ENCODE measurements at regions of chr11 and their contacts with region 1.

Region 1: DNA sequence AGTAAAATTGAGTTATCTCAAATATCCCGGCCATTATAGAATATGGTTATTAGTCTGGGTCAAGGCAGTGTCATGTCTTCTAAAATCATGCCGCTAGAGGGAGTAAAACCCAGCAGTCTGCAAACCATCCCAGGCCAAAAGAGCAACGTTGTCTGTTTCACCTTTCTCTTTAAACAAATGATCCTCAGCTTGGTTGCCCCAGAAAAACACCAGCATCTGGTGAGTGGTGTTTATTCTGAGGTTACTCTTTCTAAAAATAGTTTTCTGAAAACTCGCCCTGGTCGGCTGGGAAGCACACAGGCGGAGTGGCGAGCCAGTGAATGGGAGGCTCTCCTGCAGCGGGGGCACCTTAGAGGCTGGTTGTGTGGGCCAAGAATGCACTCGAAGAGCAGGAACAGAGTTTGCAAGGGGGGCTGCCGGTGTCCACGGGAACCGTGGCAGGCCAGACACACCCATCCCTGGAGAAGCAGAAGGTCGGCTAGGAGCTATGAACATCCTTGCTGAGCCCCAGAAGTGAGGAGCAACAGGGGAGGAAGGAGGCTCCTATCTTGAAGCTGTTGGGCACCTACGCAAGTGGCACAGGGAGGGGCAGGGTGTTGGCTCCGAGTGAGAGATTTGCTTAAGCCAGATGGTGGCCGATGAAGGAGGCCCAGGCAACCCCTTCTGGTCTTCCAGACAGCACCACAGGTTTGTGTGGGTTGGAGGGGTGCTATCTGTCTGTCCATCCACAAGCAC is 297.1 kb downstream of the ETS1 start:
- DNase-seq: peak; percentile 76
- H3K4me3 Mint-ChIP-seq: peak overlapping the region; percentile 90
- H3K27ac Mint-ChIP-seq: peak overlapping the region; percentile 98
- H3K4me1 Mint-ChIP-seq: peaks cover 100% of the 10 kb centered on the region
- H3K27me3 Mint-ChIP-seq: peaks cover 1% of the 10 kb centered on the region

Region 2: DNA sequence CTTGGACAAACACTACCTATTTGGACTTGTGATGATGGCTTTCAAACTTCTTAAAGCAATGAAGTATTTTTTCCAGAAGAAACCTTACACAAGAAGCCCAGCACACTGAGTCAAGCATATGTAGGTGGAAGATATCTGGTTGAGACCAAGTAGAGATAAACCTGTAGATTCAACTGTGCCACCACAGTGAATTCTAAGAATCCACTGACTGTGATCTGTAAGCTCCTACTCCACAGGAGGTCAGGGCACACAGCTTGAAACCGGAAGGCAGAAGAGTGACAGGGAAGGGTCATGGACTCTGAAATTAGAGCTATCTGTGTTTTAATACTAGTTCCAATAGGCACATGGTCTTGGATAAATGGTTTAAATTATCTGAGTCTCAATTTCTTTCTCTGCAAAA is 107.4 kb before region 1 on chr11:
- intact Hi-C with region 1: loop called (anchors 2 kb)
- DNase-seq: no peak
- H3K4me3 Mint-ChIP-seq: no peak overlapping the region
- H3K27ac Mint-ChIP-seq: peak overlapping the region; percentile 51
- H3K4me1 Mint-ChIP-seq: peaks cover 45% of the 10 kb centered on the region
- H3K27me3 Mint-ChIP-seq: no peaks in the 10 kb centered on the region

Region 3: GRCh38 chr11:128251140-128251539 is 39.1 kb before region 1 on chr11:
- intact Hi-C with region 1: no loop called
- DNase-seq: no peak
- H3K4me3 Mint-ChIP-seq: no peak overlapping the region
- H3K27ac Mint-ChIP-seq: no peak overlapping the region
- H3K4me1 Mint-ChIP-seq: no peaks in the 10 kb centered on the region
- H3K27me3 Mint-ChIP-seq: peaks cover 10% of the 10 kb centered on the region

Region 4: GRCh38 chr11:128302425-128303186 is 12.3 kb after region 1 on chr11:
- intact Hi-C with region 1: loop called (anchors 1 kb)
- DNase-seq: peak; percentile 79
- H3K4me3 Mint-ChIP-seq: peak overlapping the region; percentile 91
- H3K27ac Mint-ChIP-seq: peak overlapping the region; percentile 97
- H3K4me1 Mint-ChIP-seq: peaks cover 85% of the 10 kb centered on the region
- H3K27me3 Mint-ChIP-seq: no peaks in the 10 kb centered on the region

Region 5: DNA sequence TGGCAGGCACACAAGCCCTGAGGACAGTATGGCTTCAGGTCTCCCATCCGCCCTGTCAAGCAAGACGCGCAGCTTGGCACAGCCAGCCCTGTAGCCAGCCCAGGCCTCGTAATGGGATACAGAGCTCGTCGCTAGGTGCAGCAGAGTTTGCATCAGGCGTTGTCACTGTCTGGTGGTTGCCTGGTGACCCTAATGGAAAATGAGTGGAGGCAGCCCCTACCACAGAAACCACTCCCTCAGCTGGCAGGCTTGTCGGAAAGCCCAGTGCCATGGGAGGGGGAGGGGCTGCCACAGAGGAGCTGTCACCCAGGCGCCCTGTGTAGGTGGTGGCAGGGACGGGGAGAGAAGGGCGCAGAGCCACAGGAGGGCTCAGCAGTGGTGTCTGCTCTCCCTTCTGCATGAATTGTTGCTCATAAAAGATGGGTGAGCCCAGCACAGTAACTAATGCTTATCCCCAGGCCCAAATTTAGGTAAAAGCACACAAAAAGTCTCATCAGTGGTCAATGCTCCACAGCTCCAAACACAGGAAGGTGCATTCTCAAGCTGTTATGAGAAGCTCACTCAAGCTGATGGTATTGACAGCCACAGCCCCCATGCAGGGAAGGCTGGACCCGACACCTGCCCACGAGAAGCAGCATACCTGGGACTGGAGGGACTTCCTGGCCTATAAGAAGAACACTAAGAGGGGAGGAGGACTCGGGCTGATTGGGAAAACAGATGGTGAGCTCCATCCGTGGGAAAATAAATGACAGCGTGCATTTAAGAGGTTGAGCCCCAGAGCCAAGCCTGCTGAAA is 132.5 kb after region 1 on chr11:
- intact Hi-C with region 1: loop called (anchors 1 kb)
- DNase-seq: peak; percentile 64
- H3K4me3 Mint-ChIP-seq: peak overlapping the region; percentile 69
- H3K27ac Mint-ChIP-seq: peak overlapping the region; percentile 92
- H3K4me1 Mint-ChIP-seq: peaks cover 38% of the 10 kb centered on the region
- H3K27me3 Mint-ChIP-seq: no peaks in the 10 kb centered on the region

Region 6: GRCh38 chr11:128552783-128553661 is 262.7 kb after region 1 on chr11:
- intact Hi-C with region 1: loop called (anchors 1 kb)
- DNase-seq: no peak
- H3K4me3 Mint-ChIP-seq: peak overlapping the region; percentile 0
- H3K27ac Mint-ChIP-seq: peak overlapping the region; percentile 53
- H3K4me1 Mint-ChIP-seq: peaks cover 60% of the 10 kb centered on the region
- H3K27me3 Mint-ChIP-seq: no peaks in the 10 kb centered on the region

Region 7: GRCh38 chr11:128757235-128757711 is 467.0 kb after region 1 on chr11:
- intact Hi-C with region 1: loop called (anchors 1 kb)
- DNase-seq: peak; percentile 55
- H3K4me3 Mint-ChIP-seq: peak overlapping the region; percentile 63
- H3K27ac Mint-ChIP-seq: peak overlapping the region; percentile 95
- H3K4me1 Mint-ChIP-seq: peaks cover 68% of the 10 kb centered on the region
- H3K27me3 Mint-ChIP-seq: no peaks in the 10 kb centered on the region